ENCODE measurements at regions of chr16 and their contacts with region 1.

Region 1: DNA sequence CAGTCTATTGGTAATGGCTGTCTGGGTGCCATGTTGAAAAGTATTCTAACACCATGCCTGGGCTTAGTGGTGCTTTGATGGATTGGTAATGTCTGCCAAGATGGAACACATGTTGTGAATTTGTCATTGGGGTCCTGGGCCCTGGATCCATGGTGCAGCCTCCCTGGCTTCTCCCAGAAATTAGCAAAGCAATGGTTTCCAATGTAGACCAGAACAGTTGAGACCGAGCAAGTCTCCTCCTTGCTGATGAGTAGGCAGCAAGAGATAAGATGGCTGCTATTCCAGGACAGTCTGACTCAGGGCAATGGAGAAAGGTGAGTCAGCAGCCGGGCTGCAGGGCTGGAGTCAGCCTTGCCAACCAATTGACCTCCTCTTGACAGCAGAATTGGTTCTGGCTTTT is 30.8 kb downstream of the GPR139 start:
- DNase-seq: no peak
- ATAC-seq: no peak
- H3K4me3 ChIP-seq: no peak overlapping the region
- H3K27ac ChIP-seq: no peak overlapping the region
- H3K4me1 ChIP-seq: no peaks in the 10 kb centered on the region
- H3K27me3 ChIP-seq: peaks cover 0 to 27% (median 10%) of the 10 kb centered on the region in 7 donors
- CTCF ChIP-seq: no peak

Region 2: DNA sequence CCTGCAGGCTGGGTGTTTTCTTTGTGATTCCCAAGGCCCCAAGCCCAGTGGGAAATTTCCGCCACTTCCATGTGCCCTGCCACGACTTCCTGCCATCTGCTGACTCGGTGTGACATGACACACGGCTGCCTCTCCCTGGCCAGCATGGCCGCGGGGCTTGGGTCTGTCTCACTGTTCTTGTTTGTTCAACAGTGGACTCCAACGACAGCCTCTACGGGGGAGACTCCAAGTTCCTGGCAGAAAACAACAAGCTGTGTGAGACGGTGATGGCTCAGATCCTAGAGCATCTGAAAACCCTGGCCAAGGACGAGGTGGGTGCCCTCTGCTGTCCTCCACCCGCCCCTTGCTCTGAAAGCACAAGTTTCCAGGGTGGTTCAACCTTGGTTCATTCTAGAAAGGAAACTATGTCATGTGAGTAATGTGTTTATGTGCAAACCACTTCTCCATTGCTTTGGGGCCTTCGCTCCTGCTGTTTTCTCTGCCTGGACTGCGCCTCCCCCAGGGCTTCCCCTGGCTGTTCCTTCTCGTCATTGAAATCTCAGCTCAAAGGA is 351.6 kb before region 1 on chr16:
- intact Hi-C with region 1: no loop called
- DNase-seq: peak in 1 of 2 donors; percentile 13
- ATAC-seq: peak in 7 of 8 donors; percentile 15 to 51 (median 34)
- H3K4me3 ChIP-seq: no peak overlapping the region
- H3K27ac ChIP-seq: peak overlapping the region in 7 of 10 donors; percentile 14 to 78 (median 42)
- H3K4me1 ChIP-seq: peaks cover 0 to 34% (median 19%) of the 10 kb centered on the region in 9 donors
- H3K27me3 ChIP-seq: no peaks in the 10 kb centered on the region
- CTCF ChIP-seq: no peak

Region 3: DNA sequence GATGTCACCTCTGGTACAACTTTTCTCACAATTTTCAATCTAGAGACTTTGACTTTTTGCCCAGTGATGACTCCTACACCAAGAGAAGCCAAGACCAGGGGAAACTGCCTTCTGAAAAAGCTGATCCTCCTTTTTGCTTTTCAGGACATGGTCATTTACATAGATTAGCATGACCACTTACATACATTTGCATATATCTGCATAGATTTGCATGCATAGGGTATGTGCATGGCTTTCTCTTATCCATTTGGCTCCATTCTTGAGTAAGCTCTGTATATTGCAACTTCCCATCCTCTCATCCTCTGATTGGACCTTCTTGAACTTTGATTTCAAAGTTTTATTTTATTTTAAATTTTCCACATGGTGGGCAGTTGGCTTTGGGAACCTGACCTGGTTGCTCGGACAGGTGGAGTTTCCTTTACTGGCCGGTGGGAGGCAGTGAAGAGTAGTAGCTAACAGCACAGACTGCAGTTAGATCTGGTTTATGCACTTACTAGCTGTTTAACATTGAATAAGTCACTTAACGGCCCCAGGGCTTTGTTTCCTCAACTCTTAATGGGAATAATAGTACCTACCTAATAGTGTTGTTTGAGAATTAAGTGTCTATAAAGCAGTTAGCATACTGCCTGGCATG is 62.1 kb before region 1 on chr16:
- intact Hi-C with region 1: no loop called
- DNase-seq: no peak
- ATAC-seq: no peak
- H3K4me3 ChIP-seq: no peak overlapping the region
- H3K27ac ChIP-seq: no peak overlapping the region
- H3K4me1 ChIP-seq: no peaks in the 10 kb centered on the region
- H3K27me3 ChIP-seq: peaks cover 0 to 21% (median 10%) of the 10 kb centered on the region in 7 donors
- CTCF ChIP-seq: peak in 4 of 9 donors; percentile 18 to 36 (median 20)

Region 4: DNA sequence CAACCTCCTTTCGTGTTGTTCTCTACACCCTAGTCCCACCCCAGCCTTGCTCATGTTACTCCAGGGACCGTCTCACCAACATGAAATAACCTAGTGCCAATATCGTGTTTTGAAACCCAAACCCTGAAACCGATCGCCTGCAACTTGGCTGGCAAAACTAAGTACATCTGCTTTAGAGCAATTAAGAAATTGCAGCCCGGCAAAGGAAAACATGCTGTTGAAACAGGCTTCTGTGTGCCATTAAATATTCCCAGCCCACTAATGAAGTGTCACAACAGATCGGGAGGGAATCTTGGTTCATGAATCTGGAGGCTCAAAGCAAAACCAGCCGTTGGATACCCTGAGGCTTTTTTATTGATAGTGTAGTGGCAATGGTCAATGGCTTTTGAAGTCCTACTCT is 79.2 kb after region 1 on chr16:
- intact Hi-C with region 1: loop called in 1 of 10 experiments (anchors 10 kb)
- DNase-seq: no peak
- ATAC-seq: no peak
- H3K4me3 ChIP-seq: no peak overlapping the region
- H3K27ac ChIP-seq: no peak overlapping the region
- H3K4me1 ChIP-seq: no peaks in the 10 kb centered on the region
- H3K27me3 ChIP-seq: peaks cover 0 to 33% (median 0%) of the 10 kb centered on the region in 7 donors
- CTCF ChIP-seq: no peak

Measured in heart right ventricle (tissue), 16 donors.